B cell (primary cell): ENCODE measurements at regions of chr11 and their contacts with region 1.

Region 1: DNA sequence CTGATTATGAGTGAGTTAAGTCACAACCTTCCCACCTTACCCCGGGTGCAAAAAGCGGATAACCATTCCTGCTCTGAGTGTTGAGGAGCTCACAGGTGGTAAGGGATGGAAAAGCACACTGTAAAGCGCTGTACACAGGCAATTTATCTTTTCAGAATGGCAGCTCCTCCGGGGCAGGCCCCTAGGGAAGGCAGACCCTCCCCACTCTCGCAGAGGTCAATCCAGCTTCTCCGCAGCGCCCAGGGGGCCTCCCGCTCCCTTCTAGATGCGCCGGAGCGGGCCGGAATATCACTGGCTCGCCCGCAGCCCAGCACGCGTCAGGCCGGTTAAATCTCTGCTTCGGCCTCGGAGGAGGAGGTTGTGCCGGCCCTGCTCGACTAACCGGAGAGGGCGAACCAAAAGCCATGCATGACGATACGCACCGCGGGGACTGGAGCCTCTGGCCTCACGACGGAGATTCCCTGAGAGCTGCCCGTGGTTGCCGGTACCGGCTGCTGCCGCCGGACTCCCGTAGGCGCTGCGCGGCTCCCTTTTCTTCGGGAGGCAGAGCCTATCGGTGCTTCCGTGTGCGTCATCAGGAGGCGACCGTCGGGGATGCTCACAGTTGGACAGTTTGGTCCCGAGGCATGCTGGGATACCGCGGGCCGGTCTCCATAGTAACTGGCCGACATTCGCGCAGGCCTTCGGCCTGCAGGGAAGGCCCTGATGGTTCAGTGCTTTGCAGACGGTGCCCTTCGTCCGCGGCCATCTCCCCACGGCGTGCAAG is at the start of gene BRMS1:
- DNase-seq: peak; percentile 96
- ATAC-seq: peak; percentile 85
- H3K4me3 ChIP-seq: peak within 1 kb of the TSS; percentile 74 to 92 (median 84)
- H3K4me3 Mint-ChIP-seq: peak within 1 kb of the TSS; percentile 97
- H3K27ac ChIP-seq: peak within 1 kb of the TSS; percentile 75 to 86
- H3K27ac Mint-ChIP-seq: peak within 1 kb of the TSS; percentile 96
- H3K4me1 ChIP-seq: peaks cover 19 to 44% of the 10 kb centered on the region in 2 donors
- H3K4me1 Mint-ChIP-seq: peaks cover 47% of the 10 kb centered on the region
- H3K27me3 ChIP-seq: no peaks in the 10 kb centered on the region
- H3K27me3 Mint-ChIP-seq: no peaks in the 10 kb centered on the region
- CTCF ChIP-seq: peak; percentile 16
- total RNA-seq, gene BRMS1: 50.9 and 58.3 TPM in 2 replicates

Region 2: DNA sequence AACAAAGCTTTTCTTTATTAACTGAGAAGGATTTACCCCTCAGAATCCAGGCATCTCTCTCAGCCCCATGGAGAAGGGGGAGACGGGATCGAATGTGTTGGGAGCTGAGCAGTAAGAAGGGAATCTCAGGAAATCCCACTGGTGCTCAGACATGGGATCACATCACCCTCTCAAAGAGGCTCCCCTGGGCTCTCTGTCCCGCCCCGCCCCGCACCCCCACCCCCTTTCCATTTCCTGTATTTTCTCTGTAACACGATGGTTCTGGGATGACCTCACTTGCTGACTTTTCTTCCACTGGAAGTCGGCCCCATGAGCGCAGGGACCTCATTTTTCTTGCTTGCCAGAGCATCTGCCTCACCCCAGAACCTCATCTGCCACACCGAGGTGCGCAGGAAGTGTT is 1885.7 kb before region 1 on chr11:
- CTCF ChIA-PET with region 1: no interaction called
- POLR2A ChIA-PET with region 1: no interaction called
- intact Hi-C with region 1: no loop called
- DNase-seq: no peak
- ATAC-seq: no peak
- H3K4me3 ChIP-seq: no peak overlapping the region
- H3K4me3 Mint-ChIP-seq: no peak overlapping the region
- H3K27ac ChIP-seq: no peak overlapping the region
- H3K27ac Mint-ChIP-seq: no peak overlapping the region
- H3K4me1 ChIP-seq: no peaks in the 10 kb centered on the region
- H3K4me1 Mint-ChIP-seq: no peaks in the 10 kb centered on the region
- H3K27me3 ChIP-seq: no peaks in the 10 kb centered on the region
- H3K27me3 Mint-ChIP-seq: peaks cover 4% of the 10 kb centered on the region
- CTCF ChIP-seq: no peak

Region 3: DNA sequence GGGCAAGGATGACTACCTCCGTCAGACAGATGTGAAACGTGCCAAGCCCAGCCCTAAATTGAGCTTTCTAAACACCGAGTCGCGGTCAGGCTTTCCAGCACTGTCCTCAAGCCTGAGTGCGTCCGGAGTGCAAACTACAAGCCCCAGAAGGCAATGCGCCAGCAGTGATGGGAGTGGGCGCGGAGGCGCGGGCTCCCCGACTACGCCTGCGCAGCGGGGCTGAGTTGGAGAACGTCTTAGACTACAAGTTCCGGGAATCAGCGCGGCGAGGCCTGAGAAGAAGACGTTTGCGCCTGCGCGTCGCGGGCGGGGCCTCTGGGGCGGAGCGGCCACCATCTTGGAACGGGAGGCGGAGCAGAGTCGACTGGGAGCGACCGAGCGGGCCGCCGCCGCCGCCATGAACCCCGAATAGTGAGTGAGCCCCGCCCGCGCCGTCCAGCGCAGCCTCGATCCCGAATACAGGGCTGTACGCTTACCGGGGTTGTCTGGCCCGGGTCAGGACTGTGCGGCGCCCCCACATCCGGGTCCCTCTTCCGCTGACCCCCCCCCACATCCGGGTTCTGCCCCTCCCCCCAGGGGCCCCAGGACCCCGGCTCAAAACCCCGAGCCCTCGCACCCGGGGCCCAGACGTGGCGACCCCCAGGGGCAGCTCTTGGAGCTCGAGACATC is 76.3 kb before region 1 on chr11 and contains the start of gene RAB1B:
- CTCF ChIA-PET with region 1: no interaction called
- POLR2A ChIA-PET with region 1: no interaction called
- intact Hi-C with region 1: loop called (anchors 1 kb)
- DNase-seq: peak; percentile 100
- ATAC-seq: peak; percentile 77
- H3K4me3 ChIP-seq: peak within 1 kb of the TSS; percentile 83 to 100 (median 98)
- H3K4me3 Mint-ChIP-seq: peak within 1 kb of the TSS; percentile 95
- H3K27ac ChIP-seq: peak within 1 kb of the TSS; percentile 81 to 97
- H3K27ac Mint-ChIP-seq: peak within 1 kb of the TSS; percentile 96
- H3K4me1 ChIP-seq: peaks cover 14 to 27% of the 10 kb centered on the region in 2 donors
- H3K4me1 Mint-ChIP-seq: peaks cover 29% of the 10 kb centered on the region
- H3K27me3 ChIP-seq: no peaks in the 10 kb centered on the region
- H3K27me3 Mint-ChIP-seq: no peaks in the 10 kb centered on the region
- CTCF ChIP-seq: no peak
- total RNA-seq, gene RAB1B: 76.0 and 77.8 TPM in 2 replicates

Region 4: GRCh38 chr11:66328307-66329144 is 16.2 kb before region 1 on chr11:
- CTCF ChIA-PET with region 1: interaction called, 6 read pairs
- POLR2A ChIA-PET with region 1: no interaction called
- intact Hi-C with region 1: loop called (anchors 1 kb)
- DNase-seq: peak; percentile 89
- ATAC-seq: peak; percentile 98
- H3K4me3 ChIP-seq: peak overlapping the region in 1 of 5 experiments; percentile 30
- H3K4me3 Mint-ChIP-seq: peak overlapping the region; percentile 52
- H3K27ac ChIP-seq: no peak overlapping the region
- H3K27ac Mint-ChIP-seq: peak overlapping the region; percentile 47
- H3K4me1 ChIP-seq: peaks cover 15 to 25% of the 10 kb centered on the region in 2 donors
- H3K4me1 Mint-ChIP-seq: peaks cover 16% of the 10 kb centered on the region
- H3K27me3 ChIP-seq: no peaks in the 10 kb centered on the region
- H3K27me3 Mint-ChIP-seq: no peaks in the 10 kb centered on the region
- CTCF ChIP-seq: peak; percentile 93

Region 5: GRCh38 chr11:66371627-66372415 is 27.1 kb after region 1 on chr11 and contains the start of gene SLC29A2:
- CTCF ChIA-PET with region 1: no interaction called
- POLR2A ChIA-PET with region 1: interaction called, 3 read pairs
- intact Hi-C with region 1: loop called (anchors 1 kb)
- DNase-seq: peak; percentile 78
- ATAC-seq: peak; percentile 81
- H3K4me3 ChIP-seq: peak within 1 kb of the TSS; percentile 70 to 84 (median 77)
- H3K4me3 Mint-ChIP-seq: peak within 1 kb of the TSS; percentile 87
- H3K27ac ChIP-seq: peak within 1 kb of the TSS; percentile 76 to 79
- H3K27ac Mint-ChIP-seq: peak within 1 kb of the TSS; percentile 88
- H3K4me1 ChIP-seq: peaks cover 9 to 15% of the 10 kb centered on the region in 2 donors
- H3K4me1 Mint-ChIP-seq: peaks cover 10% of the 10 kb centered on the region
- H3K27me3 ChIP-seq: peaks cover 0 to 3% (median 0%) of the 10 kb centered on the region in 4 experiments
- H3K27me3 Mint-ChIP-seq: peaks cover 3% of the 10 kb centered on the region
- CTCF ChIP-seq: no peak
- total RNA-seq, gene SLC29A2: 18.5 and 20.1 TPM in 2 replicates

Region 6: DNA sequence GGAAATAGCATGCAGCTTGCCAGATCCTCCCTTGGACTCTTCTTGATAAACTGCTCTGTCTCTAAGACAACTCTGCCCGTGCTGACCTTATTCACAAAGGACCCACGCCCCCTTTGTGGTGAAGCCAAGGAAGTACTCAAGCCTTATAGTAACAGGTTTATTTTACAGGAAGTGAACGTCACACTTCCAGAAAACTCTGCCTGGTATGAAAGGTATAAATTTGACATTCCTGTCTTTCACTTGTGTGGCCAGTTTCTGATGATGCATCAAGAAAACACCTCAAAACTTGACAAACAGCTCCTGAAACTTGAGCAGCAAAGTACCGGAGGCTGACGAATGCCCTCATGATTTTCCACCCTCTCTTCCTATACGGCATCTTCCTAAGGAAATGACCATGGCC is 109.5 kb after region 1 on chr11:
- CTCF ChIA-PET with region 1: no interaction called
- POLR2A ChIA-PET with region 1: no interaction called
- intact Hi-C with region 1: no loop called
- DNase-seq: no peak
- ATAC-seq: no peak
- H3K4me3 ChIP-seq: no peak overlapping the region
- H3K4me3 Mint-ChIP-seq: no peak overlapping the region
- H3K27ac ChIP-seq: no peak overlapping the region
- H3K27ac Mint-ChIP-seq: no peak overlapping the region
- H3K4me1 ChIP-seq: peaks cover 32 to 35% of the 10 kb centered on the region in 2 donors
- H3K4me1 Mint-ChIP-seq: peaks cover 27% of the 10 kb centered on the region
- H3K27me3 ChIP-seq: no peaks in the 10 kb centered on the region
- H3K27me3 Mint-ChIP-seq: peaks cover 8% of the 10 kb centered on the region
- CTCF ChIP-seq: no peak